Heart right ventricle (tissue), 16 donors: ENCODE measurements at regions of chr11 and their contacts with region 1.

Region 1: DNA sequence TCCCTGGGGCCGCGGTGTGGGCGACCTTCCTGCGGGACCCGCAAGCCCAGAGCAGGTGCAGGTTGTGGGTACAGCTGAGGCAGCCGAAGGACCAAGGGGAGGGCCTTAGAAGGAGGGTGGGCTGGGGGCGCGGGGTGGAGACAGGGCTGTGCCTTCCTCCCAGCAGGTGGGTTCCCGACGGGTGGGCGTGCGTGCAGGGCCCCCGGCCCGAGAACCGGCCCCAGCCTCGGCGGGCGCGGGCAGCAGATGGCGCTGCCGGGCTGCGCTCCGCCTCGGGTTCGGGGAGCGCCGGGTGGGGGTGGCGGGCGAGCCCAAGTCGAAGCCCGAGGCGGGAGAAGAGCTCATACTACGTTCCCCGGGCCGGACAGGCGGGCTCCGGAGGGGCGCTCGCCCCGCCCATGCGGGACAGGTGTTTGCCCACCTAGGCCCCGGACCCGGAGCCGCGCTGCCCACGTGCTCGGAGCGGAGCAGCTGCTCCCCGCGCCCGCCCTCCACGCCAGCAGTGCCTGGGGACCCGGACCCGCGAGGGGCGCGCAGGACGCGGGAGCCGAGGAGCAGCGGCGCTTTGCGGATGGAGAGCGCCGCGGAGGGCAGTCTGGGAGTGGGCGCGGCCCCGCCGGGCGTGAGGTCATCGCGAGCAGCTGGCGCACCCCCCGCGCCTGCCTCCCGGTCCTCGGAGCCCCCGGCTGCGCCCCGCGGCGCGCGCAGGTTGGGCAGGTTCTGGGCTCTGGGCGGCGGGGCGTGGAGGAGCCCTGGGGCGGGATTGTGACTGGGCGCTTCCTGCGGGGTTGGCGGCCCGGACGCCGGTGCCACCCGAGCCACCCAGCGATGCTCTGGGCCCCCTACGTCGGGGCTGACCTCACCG is 25.3 kb downstream of the DUSP8 start:
- DNase-seq: peak; percentile 40 to 56
- ATAC-seq: peak; percentile 22 to 71 (median 52)
- H3K4me3 ChIP-seq: peak overlapping the region in 9 of 10 donors; percentile 41 to 55 (median 52)
- H3K27ac ChIP-seq: peak overlapping the region in 9 of 10 donors; percentile 65 to 96 (median 82)
- H3K4me1 ChIP-seq: peaks cover 16 to 30% (median 25%) of the 10 kb centered on the region in 9 donors
- H3K27me3 ChIP-seq: peaks cover 0 to 53% (median 32%) of the 10 kb centered on the region in 7 donors
- CTCF ChIP-seq: peak; percentile 43 to 89 (median 78)

Region 2: DNA sequence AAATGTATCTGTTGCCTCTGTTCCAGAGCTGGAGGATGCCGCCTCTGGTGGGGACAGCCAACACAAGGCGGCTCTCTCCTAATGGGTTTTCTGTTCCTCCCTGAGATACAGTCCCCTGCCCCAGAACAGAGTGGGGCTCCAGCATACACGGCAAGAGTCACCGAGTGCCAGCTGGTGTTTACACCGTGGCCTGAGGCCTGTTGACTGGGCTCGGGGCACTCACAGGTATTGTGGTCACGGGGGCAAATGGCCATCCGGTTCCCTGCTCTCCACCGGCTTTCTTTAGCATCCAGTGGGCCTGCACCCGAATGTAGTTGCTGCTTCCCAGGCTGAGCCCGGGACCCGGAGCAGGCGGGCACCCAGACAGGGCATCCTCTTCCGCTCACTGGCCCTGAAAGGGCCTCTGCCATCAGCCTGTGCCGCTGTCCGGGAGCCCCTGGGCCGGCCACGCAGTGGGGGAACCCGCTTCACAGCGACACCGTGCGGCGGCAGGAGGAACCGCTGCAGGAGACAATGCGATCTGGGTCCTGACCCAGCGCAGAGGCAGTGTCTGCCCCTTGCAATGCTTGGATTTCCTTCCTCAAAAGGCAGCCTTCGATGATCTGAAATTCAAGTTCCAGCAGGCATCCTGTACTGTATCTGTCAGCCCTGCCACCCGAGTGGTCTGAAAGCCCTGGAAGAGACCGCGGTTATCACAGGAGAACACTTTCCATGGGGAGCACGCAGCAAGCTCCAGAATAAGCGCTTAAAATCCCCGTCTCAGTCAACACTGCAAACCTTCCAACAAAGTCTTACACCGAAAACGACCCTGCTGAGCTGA is 81.9 kb after region 1 on chr11:
- intact Hi-C with region 1: loop called in 7 of 10 experiments (anchors 2 to 10 kb)
- DNase-seq: peak; percentile 47 to 71
- ATAC-seq: peak; percentile 69 to 89 (median 87)
- H3K4me3 ChIP-seq: no peak overlapping the region
- H3K27ac ChIP-seq: no peak overlapping the region
- H3K4me1 ChIP-seq: peaks cover 0 to 21% (median 4%) of the 10 kb centered on the region in 9 donors
- H3K27me3 ChIP-seq: peaks cover 0 to 63% (median 31%) of the 10 kb centered on the region in 7 donors
- CTCF ChIP-seq: peak; percentile 81 to 98 (median 92)

Region 3: GRCh38 chr11:1763796-1764661 is 217.3 kb after region 1 on chr11 and contains the start of gene CTSD:
- intact Hi-C with region 1: no loop called
- DNase-seq: peak; percentile 88 to 94
- ATAC-seq: peak; percentile 62 to 88 (median 75)
- H3K4me3 ChIP-seq: peak within 1 kb of the TSS; percentile 79 to 100 (median 100)
- H3K27ac ChIP-seq: peak within 1 kb of the TSS; percentile 93 to 99 (median 97)
- H3K4me1 ChIP-seq: peaks cover 29 to 52% (median 51%) of the 10 kb centered on the region in 9 donors
- H3K27me3 ChIP-seq: no peaks in the 10 kb centered on the region
- CTCF ChIP-seq: peak in 2 of 9 donors; percentile 28 to 30
- total RNA-seq, gene CTSD: 501 to 1,070 (median 786) TPM